SK-N-SH (cell line): ENCODE measurements at regions of chr2 and their contacts with region 1.

Region 1: GRCh38 chr2:12728221-12728777 is 11.6 kb downstream of the TRIB2 start:
- DNase-seq: no peak
- H3K4me3 ChIP-seq: no peak overlapping the region
- H3K27ac ChIP-seq: no peak overlapping the region
- H3K4me1 ChIP-seq: peaks cover 10 to 16% of the 10 kb centered on the region in 2 experiments; a peak in 3 of 4 replicates
- H3K27me3 ChIP-seq: no peaks in the 10 kb centered on the region
- CTCF ChIP-seq: no peak
- EP300 ChIP-seq: no peak
- RAD21 ChIP-seq: no peak

Region 2: DNA sequence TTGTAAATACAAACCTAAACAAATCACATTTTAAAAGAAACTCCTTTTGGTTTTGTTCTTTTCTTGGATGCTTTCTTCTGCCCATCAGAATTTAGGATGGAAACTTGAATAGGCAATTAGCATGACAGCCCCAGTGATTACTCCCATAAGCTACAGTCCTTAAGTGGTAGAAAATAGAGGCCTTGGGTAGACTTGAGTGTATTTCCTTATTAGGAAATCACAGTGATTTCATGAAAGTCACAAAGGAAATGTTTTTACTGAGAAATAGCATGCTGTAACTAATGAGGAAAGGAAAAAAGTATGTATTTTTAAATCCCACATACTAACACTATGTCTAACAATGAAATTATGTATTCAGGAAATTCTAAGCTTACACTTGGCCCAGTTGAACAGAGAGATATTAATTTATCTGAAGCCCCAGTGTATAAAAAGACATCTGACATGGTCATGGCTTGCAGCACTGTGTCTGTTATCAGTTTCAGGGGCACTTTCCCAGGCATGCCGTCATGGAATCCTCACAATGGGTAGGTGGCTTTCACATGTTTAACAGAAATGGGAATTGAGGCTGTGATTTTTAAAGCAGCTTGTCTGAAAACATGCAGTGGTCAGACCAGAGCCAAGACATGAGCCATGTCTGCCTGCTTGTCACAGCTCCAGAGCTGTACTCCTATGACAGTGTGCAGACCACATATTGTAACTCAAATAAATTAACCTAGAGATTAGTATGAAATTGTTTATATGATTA is 91.3 kb before region 1 on chr2:
- CTCF ChIA-PET with region 1: no interaction called
- POLR2A ChIA-PET with region 1: no interaction called
- DNase-seq: peak; percentile 65
- H3K4me3 ChIP-seq: no peak overlapping the region
- H3K27ac ChIP-seq: peak overlapping the region; percentile 45 to 53; a peak in 3 of 4 replicates
- H3K4me1 ChIP-seq: peaks cover 14 to 15% of the 10 kb centered on the region in 2 experiments; a peak in 3 of 4 replicates
- H3K27me3 ChIP-seq: no peaks in the 10 kb centered on the region
- CTCF ChIP-seq: no peak
- EP300 ChIP-seq: peak in 1 of 2 experiments; percentile 93; a peak in 2 of 4 replicates
- RAD21 ChIP-seq: peak; percentile 8; the same call in 1 of the 2 replicates

Region 3: GRCh38 chr2:12742891-12743290 is 14.6 kb after region 1 on chr2:
- CTCF ChIA-PET with region 1: interaction called, 13 read pairs
- POLR2A ChIA-PET with region 1: no interaction called
- DNase-seq: no peak
- H3K4me3 ChIP-seq: no peak overlapping the region
- H3K27ac ChIP-seq: no peak overlapping the region
- H3K4me1 ChIP-seq: peaks cover 10 to 16% of the 10 kb centered on the region in 2 experiments; a peak in 2 of 4 replicates
- H3K27me3 ChIP-seq: no peaks in the 10 kb centered on the region
- CTCF ChIP-seq: no peak
- EP300 ChIP-seq: no peak
- RAD21 ChIP-seq: no peak